Panc1 (cell line): ENCODE measurements at regions of chr6 and their contacts with region 1.

Region 1: DNA sequence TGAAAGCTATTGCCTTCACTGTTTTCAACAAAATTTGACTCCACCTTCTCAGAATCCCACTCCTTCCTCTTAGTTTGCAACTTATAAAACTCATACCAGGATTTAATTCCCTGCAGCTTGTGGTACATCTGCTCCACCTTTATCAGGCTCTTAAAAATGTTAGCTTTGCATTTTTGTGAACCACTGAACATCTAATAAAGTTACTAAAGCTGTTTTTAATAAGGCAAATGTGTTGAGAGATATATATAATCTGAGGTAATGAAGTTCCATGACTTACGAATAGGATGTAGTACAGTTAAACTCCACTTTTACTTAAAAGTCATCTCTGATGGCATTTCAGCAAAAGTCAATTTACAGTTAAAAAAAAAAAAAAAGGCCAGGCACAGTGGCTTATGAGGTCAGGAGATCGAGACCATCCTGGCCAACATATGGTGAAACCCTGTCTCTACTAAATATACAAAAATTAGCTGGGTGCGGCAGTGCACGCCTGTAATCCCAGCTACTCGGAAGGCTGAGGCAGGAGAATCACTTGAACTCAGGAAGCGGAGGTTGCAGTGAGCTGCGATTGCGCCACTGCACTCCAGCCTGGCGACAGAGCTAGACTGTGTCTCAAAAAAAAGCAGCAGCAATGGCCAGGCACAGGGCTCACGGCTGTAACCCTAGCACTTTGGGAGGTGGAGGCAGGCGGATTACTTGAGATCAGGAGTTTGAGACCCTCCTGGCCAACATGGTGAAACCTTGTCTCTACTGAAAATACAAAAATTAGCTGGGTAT is 106.2 kb downstream of the KIF13A start:
- DNase-seq: no peak
- ATAC-seq: no peak
- H3K4me3 ChIP-seq: no peak overlapping the region
- H3K27ac ChIP-seq: no peak overlapping the region
- H3K4me1 ChIP-seq: peaks cover 2% of the 10 kb centered on the region; the same call in 1 of the 2 replicates
- H3K27me3 ChIP-seq: no peaks in the 10 kb centered on the region
- CTCF ChIP-seq: no peak

Region 2: DNA sequence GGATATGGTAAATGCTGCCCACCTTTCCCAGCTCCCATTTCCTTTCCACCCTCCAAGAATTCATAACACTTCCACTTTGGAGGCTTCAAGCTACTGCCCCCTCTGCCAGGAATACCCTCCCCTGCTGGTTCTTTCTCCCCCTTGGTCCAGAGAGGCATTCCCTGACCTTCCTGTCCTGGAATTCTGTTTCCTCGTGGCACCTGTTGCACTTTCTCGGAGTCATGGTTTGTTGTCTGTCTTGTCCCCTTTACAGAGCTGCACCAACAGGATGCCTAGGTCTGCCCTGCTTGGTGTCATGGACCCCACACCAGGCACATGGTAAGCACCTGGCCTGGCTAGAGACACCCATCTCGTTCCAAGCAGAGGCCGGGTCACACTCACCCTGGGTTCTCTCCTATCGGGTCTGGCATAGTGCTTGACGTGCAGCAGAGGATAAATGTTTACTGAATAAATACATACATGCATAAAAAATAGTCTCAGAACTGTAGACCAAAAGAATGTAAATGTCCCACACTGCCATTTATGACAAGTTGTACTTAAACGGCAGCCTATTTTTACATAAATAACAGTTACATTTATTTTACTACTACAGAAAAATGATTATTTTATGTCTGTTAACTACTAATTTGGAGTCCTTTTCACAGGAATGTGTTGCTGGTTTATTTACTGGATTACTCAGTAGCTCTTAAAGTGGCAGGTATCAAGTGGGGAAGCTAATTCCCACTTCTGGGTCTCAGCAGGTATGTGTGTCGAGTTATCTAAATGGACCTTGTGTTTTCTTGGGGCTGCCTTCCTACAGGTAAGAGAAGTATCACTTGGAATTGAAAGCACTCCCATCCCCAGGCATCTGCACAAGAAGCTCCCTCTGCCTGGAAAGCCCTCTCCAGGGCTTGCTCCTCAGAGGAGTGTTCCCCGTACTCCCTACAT is 36.8 kb after region 1 on chr6:
- CTCF ChIA-PET with region 1: no interaction called
- POLR2A ChIA-PET with region 1: interaction called, 15 read pairs
- in situ Hi-C with region 1: no loop called
- intact Hi-C with region 1: no loop called
- DNase-seq: no peak
- ATAC-seq: no peak
- H3K4me3 ChIP-seq: no peak overlapping the region
- H3K27ac ChIP-seq: no peak overlapping the region
- H3K4me1 ChIP-seq: no peaks in the 10 kb centered on the region
- H3K27me3 ChIP-seq: no peaks in the 10 kb centered on the region
- CTCF ChIP-seq: no peak

Region 3: GRCh38 chr6:17972074-17972952 is 91.0 kb after region 1 on chr6:
- CTCF ChIA-PET with region 1: interaction called, 10 read pairs
- POLR2A ChIA-PET with region 1: no interaction called
- in situ Hi-C with region 1: no loop called
- intact Hi-C with region 1: no loop called
- DNase-seq: no peak
- ATAC-seq: no peak
- H3K4me3 ChIP-seq: no peak overlapping the region
- H3K27ac ChIP-seq: peak overlapping the region; percentile 18; the same call in 1 of the 2 replicates
- H3K4me1 ChIP-seq: peaks cover 14% of the 10 kb centered on the region
- H3K27me3 ChIP-seq: no peaks in the 10 kb centered on the region
- CTCF ChIP-seq: no peak